Mammary epithelial cell (primary cell): ENCODE measurements at regions of chr6 and their contacts with region 1.

Region 1: DNA sequence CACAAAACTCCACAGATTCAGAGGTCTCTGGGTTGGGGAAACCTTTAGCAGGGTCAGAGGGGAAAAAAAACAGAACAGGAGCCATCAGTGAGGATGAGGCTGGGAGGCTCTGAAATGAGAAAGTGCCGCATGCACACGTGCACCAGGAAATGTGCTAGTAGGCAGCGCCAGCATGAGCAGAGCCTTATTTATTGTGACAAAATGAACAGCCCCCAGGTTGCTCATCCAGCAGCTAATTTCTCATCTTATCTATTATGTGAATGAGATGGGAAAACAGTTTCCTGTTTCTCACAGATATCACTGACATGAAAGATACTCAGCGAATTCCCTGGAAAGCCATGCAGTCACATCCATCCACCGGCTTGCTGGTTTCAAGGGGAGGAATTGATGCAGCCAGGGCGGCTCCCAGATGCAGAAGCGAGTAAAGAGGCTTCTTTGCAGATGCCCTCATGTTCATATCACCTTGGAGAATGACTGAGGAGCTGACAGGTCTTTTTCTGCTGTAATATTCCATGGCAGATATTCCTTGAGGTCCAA is 176.1 kb downstream of the MBOAT1 start:
- DNase-seq: no peak
- H3K4me3 ChIP-seq: no peak overlapping the region
- H3K27ac ChIP-seq: no peak overlapping the region
- H3K4me1 ChIP-seq: no peaks in the 10 kb centered on the region
- H3K27me3 ChIP-seq: no peaks in the 10 kb centered on the region
- CTCF ChIP-seq: no peak

Region 2: DNA sequence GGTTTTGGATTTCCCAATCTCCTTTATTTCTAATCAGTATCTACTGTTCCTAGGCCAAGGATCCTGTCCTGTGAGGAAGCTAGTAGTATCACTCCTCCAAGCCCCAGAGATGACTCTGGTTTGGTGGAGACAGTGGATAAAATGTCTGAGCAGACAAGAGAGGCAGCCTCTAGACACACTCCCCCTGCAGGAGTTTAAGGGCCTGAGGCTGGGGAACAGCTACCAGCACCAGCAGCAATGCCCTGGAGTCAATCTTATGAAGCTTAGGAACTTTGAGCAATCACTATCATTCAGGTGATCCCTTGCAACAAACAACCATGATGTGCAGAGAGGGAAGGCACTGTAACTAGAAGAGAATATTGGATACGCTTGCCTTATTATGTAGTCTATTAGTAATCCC is 583.7 kb before region 1 on chr6:
- CTCF ChIA-PET with region 1: interaction called, 12 read pairs
- dilution Hi-C with region 1: no loop called
- in situ Hi-C with region 1: no loop called
- intact Hi-C with region 1: no loop called
- DNase-seq: no peak
- H3K4me3 ChIP-seq: no peak overlapping the region
- H3K27ac ChIP-seq: no peak overlapping the region
- H3K4me1 ChIP-seq: no peaks in the 10 kb centered on the region
- H3K27me3 ChIP-seq: no peaks in the 10 kb centered on the region
- CTCF ChIP-seq: no peak

Region 3: DNA sequence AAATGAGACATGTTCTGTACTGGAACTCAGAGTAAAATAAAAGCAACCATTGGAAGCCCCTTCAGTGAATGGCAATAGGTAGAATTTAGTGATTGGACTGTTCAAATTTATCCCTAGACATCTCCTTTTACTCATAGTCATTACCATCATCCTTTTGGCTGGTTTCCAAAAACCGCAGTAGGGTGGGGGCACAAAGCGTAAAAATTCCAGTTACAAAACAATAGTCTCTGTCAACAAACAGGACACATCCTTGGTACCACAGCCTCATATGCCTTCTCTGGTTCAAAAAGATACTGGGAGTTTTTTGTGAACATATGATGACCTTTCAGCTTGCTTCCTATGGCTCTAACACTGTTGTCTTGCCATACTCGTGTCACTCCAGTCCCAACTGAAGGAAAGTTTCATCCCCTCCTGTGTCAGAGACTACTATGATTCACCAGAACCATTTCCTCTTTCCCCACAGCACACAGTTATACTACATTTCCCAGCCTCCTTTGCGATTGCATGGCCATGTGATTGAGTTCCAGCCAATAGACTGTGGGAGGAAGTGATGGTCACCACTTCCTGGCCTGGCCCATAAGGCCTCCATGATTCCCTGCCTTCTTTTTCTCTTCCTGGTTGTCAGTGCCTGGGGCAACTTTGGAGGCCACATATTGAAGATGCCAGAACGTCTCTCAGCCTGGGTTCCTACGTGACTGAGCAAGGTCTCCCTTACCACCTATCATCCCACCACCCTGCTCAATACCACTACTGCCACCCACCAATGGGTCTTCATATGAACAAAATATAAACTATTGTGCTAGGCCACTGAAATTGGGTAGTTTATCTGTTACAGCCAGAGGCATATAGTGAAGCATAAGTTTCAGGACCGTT is 36.7 kb before region 1 on chr6:
- CTCF ChIA-PET with region 1: no interaction called
- dilution Hi-C with region 1: no loop called
- in situ Hi-C with region 1: no loop called
- intact Hi-C with region 1: no loop called
- DNase-seq: peak; percentile 65
- H3K4me3 ChIP-seq: no peak overlapping the region
- H3K27ac ChIP-seq: no peak overlapping the region
- H3K4me1 ChIP-seq: peaks cover 8% of the 10 kb centered on the region
- H3K27me3 ChIP-seq: no peaks in the 10 kb centered on the region
- CTCF ChIP-seq: no peak

Region 4: GRCh38 chr6:20213271-20213798 is 177.1 kb after region 1 on chr6:
- CTCF ChIA-PET with region 1: no interaction called
- dilution Hi-C with region 1: no loop called
- in situ Hi-C with region 1: no loop called
- intact Hi-C with region 1: no loop called
- DNase-seq: no peak
- H3K4me3 ChIP-seq: peak overlapping the region in 2 of 3 experiments; percentile 50 to 80
- H3K27ac ChIP-seq: peak overlapping the region; percentile 92
- H3K4me1 ChIP-seq: peaks cover 22% of the 10 kb centered on the region
- H3K27me3 ChIP-seq: no peaks in the 10 kb centered on the region
- CTCF ChIP-seq: no peak

Region 5: DNA sequence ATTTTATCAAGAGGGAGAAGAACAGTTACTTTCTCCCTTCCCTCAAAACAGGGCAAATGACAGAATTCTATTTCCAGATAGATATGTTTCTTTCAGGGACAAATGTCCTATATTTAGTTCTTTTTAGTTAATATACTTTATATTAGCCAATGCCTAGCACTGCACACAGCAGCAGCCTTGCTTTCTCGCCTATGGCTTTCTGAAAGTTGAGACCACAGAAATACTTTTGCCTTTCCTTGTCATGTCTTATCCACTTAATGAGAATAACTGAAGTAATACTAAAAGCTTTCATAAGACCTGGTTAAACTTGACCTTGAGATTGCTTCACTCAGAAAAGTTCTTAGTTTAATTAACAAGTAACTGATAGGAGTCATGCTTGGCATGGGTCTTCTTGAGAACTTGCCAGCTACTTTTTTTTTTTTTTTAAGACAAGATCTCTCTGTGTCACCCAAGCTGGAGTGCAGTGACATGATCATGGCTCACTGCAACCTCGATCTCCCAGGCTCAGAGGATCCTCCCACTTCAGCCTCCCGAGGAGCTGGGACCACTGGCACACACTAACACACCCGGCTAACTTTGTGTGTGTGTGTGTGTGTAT is 657.4 kb after region 1 on chr6:
- CTCF ChIA-PET with region 1: no interaction called
- dilution Hi-C with region 1: no loop called
- in situ Hi-C with region 1: no loop called
- intact Hi-C with region 1: no loop called
- DNase-seq: peak; percentile 52
- H3K4me3 ChIP-seq: no peak overlapping the region
- H3K27ac ChIP-seq: no peak overlapping the region
- H3K4me1 ChIP-seq: peaks cover 8% of the 10 kb centered on the region
- H3K27me3 ChIP-seq: no peaks in the 10 kb centered on the region
- CTCF ChIP-seq: no peak